ENCODE measurements at regions of chr19 and their contacts with region 1.

Region 1: GRCh38 chr19:31349160-31349881 is at the start of gene TSHZ3:
- DNase-seq: peak; percentile 22
- H3K4me3 ChIP-seq: peak within 1 kb of the TSS; percentile 71 to 79 (median 73)
- H3K27ac ChIP-seq: no peak within 1 kb of the TSS
- H3K4me1 ChIP-seq: peaks cover 10% of the 10 kb centered on the region
- H3K27me3 ChIP-seq: peaks cover 30 to 42% of the 10 kb centered on the region in 2 experiments
- CTCF ChIP-seq: no peak
- POLR2A ChIP-seq: no peak
- total RNA-seq, gene TSHZ3: 6.0 and 6.2 TPM in 2 replicates

Region 2: GRCh38 chr19:31214086-31214485 is 135.2 kb before region 1 on chr19:
- CTCF ChIA-PET with region 1: no interaction called
- POLR2A ChIA-PET with region 1: no interaction called
- dilution Hi-C with region 1: no loop called
- intact Hi-C with region 1: loop called (anchors 5 kb)
- DNase-seq: peak; percentile 17
- H3K4me3 ChIP-seq: no peak overlapping the region
- H3K27ac ChIP-seq: peak overlapping the region; percentile 39
- H3K4me1 ChIP-seq: peaks cover 2% of the 10 kb centered on the region
- H3K27me3 ChIP-seq: no peaks in the 10 kb centered on the region
- CTCF ChIP-seq: no peak
- POLR2A ChIP-seq: no peak

Region 3: GRCh38 chr19:31316201-31316951 is 32.9 kb before region 1 on chr19:
- CTCF ChIA-PET with region 1: no interaction called
- POLR2A ChIA-PET with region 1: no interaction called
- dilution Hi-C with region 1: no loop called
- intact Hi-C with region 1: loop called (anchors 5 kb)
- DNase-seq: peak; percentile 4
- H3K4me3 ChIP-seq: no peak overlapping the region
- H3K27ac ChIP-seq: no peak overlapping the region
- H3K4me1 ChIP-seq: peaks cover 5% of the 10 kb centered on the region
- H3K27me3 ChIP-seq: no peaks in the 10 kb centered on the region
- CTCF ChIP-seq: no peak
- POLR2A ChIP-seq: no peak

Region 4: GRCh38 chr19:31330761-31331160 is 18.6 kb before region 1 on chr19:
- CTCF ChIA-PET with region 1: interaction called, 5 read pairs
- POLR2A ChIA-PET with region 1: no interaction called
- dilution Hi-C with region 1: no loop called
- intact Hi-C with region 1: loop called (anchors 1 kb)
- DNase-seq: no peak
- H3K4me3 ChIP-seq: no peak overlapping the region
- H3K27ac ChIP-seq: no peak overlapping the region
- H3K4me1 ChIP-seq: peaks cover 23% of the 10 kb centered on the region
- H3K27me3 ChIP-seq: no peaks in the 10 kb centered on the region
- CTCF ChIP-seq: no peak
- POLR2A ChIP-seq: no peak

Region 5: DNA sequence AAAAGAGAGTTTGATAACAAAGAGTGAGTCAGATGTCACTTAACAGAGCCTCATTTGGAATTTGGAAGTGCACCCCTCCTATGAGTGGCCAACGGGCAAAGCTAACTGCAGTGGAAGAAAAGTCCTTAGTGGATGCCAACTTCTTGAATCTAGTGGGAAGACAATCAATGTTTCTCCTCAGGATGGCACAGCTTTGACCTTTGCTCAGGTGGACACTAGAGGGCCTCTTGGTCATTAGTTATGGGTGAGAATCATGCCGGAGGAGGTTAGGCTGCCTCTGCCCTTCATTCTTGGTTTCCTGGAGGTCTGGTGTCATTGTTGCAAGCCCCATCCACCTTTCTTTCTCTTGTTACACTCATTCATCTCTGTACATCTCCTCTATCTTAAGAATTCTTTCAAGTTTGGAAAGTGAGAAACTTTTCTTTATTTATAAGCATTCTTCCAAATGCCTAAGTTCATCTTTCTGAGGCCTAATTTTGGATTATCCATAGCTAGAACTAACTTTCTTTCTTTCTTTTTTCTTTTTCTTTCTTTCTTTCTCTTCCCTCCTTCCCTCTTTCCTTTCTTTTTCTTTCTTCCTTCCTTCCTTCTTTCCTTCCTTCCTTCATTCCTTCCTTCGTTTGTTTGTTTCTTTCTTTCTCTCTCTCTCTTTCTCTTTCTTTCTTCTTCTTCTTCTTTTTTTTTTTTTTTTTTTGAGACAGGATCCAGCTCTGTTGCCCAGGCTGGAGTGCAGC is 327.1 kb after region 1 on chr19:
- CTCF ChIA-PET with region 1: no interaction called
- POLR2A ChIA-PET with region 1: no interaction called
- dilution Hi-C with region 1: no loop called
- intact Hi-C with region 1: no loop called
- DNase-seq: no peak
- H3K4me3 ChIP-seq: no peak overlapping the region
- H3K27ac ChIP-seq: no peak overlapping the region
- H3K4me1 ChIP-seq: no peaks in the 10 kb centered on the region
- H3K27me3 ChIP-seq: no peaks in the 10 kb centered on the region
- CTCF ChIP-seq: no peak
- POLR2A ChIP-seq: no peak

Region 6: DNA sequence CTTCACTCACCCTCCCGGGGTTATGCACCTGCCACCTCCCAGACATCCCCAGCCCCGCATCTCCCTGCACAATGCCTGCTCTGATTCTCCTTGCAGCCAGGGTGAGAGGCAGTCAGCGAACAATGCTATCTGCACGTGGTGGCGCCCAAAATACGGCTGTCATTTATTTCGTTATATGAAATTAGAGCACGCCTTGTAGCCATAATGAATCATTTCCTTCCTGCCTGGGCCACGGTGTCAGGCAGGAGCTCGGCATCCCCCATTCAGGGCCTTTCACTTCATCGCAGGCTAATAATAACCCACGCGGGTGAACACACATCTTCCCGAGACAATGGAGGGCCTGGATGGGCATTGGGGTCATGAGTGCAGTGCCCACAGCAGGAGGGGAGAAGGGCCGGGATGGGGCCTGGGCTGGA is 852.3 kb after region 1 on chr19:
- CTCF ChIA-PET with region 1: no interaction called
- POLR2A ChIA-PET with region 1: no interaction called
- dilution Hi-C with region 1: no loop called
- intact Hi-C with region 1: loop called (anchors 2 kb)
- DNase-seq: peak; percentile 61
- H3K4me3 ChIP-seq: no peak overlapping the region
- H3K27ac ChIP-seq: no peak overlapping the region
- H3K4me1 ChIP-seq: peaks cover 6% of the 10 kb centered on the region
- H3K27me3 ChIP-seq: no peaks in the 10 kb centered on the region
- CTCF ChIP-seq: no peak
- POLR2A ChIP-seq: no peak